ENCODE measurements at regions of chr20 and their contacts with region 1.

Region 1: GRCh38 chr20:53652090-53652858 is 58.6 kb upstream of the ZNF217 start:
- DNase-seq: peak; percentile 65
- ATAC-seq: peak; percentile 50
- H3K4me3 ChIP-seq: peak overlapping the region in 4 of 5 experiments; percentile 13 to 48 (median 22)
- H3K4me3 Mint-ChIP-seq: peak overlapping the region; percentile 87
- H3K27ac ChIP-seq: peak overlapping the region; percentile 84 to 87
- H3K27ac Mint-ChIP-seq: peak overlapping the region; percentile 97
- H3K4me1 ChIP-seq: peaks cover 38 to 50% of the 10 kb centered on the region in 2 donors
- H3K4me1 Mint-ChIP-seq: peaks cover 43% of the 10 kb centered on the region
- H3K27me3 ChIP-seq: no peaks in the 10 kb centered on the region
- H3K27me3 Mint-ChIP-seq: no peaks in the 10 kb centered on the region
- CTCF ChIP-seq: no peak

Region 2: DNA sequence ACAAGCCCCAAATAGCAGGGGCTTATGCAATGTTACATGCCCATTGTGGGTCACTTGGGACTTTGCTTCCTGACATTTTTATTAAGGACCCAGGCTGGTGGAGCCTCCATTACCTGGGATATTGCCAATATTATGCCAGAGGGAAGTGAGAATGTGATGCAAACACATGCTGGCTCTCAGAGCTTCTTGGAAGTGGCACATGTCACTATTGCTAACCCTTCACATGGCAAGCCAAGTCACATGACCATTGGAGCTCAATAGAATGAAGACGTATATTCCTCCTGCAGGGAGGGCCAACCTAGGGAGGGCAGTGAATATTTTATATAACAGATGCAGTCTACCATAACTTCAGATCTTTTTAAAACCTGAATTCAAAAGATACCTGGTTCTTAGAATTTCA is 1320.0 kb before region 1 on chr20:
- CTCF ChIA-PET with region 1: no interaction called
- POLR2A ChIA-PET with region 1: no interaction called
- intact Hi-C with region 1: no loop called
- DNase-seq: no peak
- ATAC-seq: no peak
- H3K4me3 ChIP-seq: no peak overlapping the region
- H3K4me3 Mint-ChIP-seq: no peak overlapping the region
- H3K27ac ChIP-seq: no peak overlapping the region
- H3K27ac Mint-ChIP-seq: no peak overlapping the region
- H3K4me1 ChIP-seq: no peaks in the 10 kb centered on the region
- H3K4me1 Mint-ChIP-seq: no peaks in the 10 kb centered on the region
- H3K27me3 ChIP-seq: no peaks in the 10 kb centered on the region
- H3K27me3 Mint-ChIP-seq: peaks cover 18% of the 10 kb centered on the region
- CTCF ChIP-seq: no peak

Region 3: DNA sequence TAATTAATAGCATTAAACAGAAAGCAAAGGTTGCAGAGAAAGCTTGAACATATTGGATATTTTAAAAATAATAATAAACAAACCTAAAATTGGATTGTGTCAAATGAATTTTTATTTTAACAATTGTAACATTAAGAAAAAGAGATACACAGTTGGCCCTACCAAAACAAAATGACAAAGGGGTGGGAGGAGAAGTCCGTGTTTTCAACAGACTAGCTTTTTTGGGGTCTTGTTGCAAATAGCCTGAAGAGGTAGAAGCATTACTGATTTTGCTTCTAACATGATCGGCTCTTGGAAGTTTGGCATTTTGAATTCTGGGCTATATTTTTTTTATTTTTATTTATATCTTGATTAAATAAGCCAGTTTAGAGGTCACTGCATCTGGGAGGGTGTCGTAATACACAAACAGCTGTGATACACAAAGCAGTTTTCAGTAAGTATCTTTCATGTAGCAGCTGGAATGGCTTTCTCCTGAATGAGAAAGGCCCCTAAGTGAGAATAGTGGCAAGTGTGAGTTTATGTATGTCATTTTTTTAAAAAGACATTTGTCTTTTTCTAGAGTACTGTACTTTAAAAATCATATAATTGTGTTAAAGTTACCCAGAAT is 26.8 kb after region 1 on chr20:
- CTCF ChIA-PET with region 1: no interaction called
- POLR2A ChIA-PET with region 1: no interaction called
- intact Hi-C with region 1: no loop called
- DNase-seq: no peak
- ATAC-seq: no peak
- H3K4me3 ChIP-seq: no peak overlapping the region
- H3K4me3 Mint-ChIP-seq: no peak overlapping the region
- H3K27ac ChIP-seq: no peak overlapping the region
- H3K27ac Mint-ChIP-seq: no peak overlapping the region
- H3K4me1 ChIP-seq: peaks cover 24 to 25% of the 10 kb centered on the region in 2 donors
- H3K4me1 Mint-ChIP-seq: peaks cover 25% of the 10 kb centered on the region
- H3K27me3 ChIP-seq: no peaks in the 10 kb centered on the region
- H3K27me3 Mint-ChIP-seq: no peaks in the 10 kb centered on the region
- CTCF ChIP-seq: no peak

Region 4: DNA sequence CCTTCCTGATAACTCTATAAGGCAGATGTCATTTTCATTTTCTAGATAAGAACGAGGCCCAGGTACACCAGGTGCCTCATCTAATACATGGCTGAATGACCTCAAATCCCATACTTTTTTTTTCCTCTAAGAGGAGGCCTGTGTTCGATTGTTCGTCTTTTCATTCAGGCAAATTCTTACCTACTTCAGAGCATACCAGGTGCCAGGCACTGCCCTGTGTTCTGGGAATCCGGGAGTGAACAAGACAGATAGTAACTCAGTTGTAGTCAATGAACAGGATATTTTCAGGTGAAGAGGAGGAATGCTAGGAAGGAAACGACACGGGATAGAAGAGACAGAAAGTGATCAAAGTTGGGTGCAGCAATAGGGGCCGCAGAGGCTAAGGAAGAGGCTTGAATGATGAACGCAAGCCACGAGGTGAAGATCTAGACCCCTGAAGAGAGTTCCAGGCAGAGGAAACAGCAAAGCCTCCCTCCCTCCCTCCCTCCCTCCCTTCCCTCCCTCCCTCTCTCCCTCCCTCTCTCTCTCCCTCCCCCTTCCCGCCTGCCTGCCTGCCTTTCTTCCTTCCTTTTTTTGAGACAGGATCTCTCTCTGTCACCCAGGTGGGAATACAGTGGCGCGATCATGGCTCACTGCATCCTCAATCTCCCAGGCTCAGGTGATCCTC is 91.5 kb after region 1 on chr20:
- CTCF ChIA-PET with region 1: no interaction called
- POLR2A ChIA-PET with region 1: no interaction called
- intact Hi-C with region 1: no loop called
- DNase-seq: no peak
- ATAC-seq: no peak
- H3K4me3 ChIP-seq: no peak overlapping the region
- H3K4me3 Mint-ChIP-seq: no peak overlapping the region
- H3K27ac ChIP-seq: no peak overlapping the region
- H3K27ac Mint-ChIP-seq: peak overlapping the region; percentile 27
- H3K4me1 ChIP-seq: peaks cover 37% of the 10 kb centered on the region in 2 donors
- H3K4me1 Mint-ChIP-seq: peaks cover 40% of the 10 kb centered on the region
- H3K27me3 ChIP-seq: no peaks in the 10 kb centered on the region
- H3K27me3 Mint-ChIP-seq: no peaks in the 10 kb centered on the region
- CTCF ChIP-seq: no peak

Region 5: GRCh38 chr20:53934421-53935343 is 282.4 kb after region 1 on chr20:
- CTCF ChIA-PET with region 1: interaction called, 12 read pairs
- POLR2A ChIA-PET with region 1: no interaction called
- intact Hi-C with region 1: loop called (anchors 2 kb)
- DNase-seq: peak; percentile 45
- ATAC-seq: peak; percentile 60
- H3K4me3 ChIP-seq: peak overlapping the region in 3 of 5 experiments; percentile 1 to 11 (median 4)
- H3K4me3 Mint-ChIP-seq: peak overlapping the region; percentile 76
- H3K27ac ChIP-seq: peak overlapping the region; percentile 67 to 74
- H3K27ac Mint-ChIP-seq: peak overlapping the region; percentile 84
- H3K4me1 ChIP-seq: peaks cover 60 to 72% of the 10 kb centered on the region in 2 donors
- H3K4me1 Mint-ChIP-seq: peaks cover 84% of the 10 kb centered on the region
- H3K27me3 ChIP-seq: no peaks in the 10 kb centered on the region
- H3K27me3 Mint-ChIP-seq: no peaks in the 10 kb centered on the region
- CTCF ChIP-seq: no peak